Right ventricle myocardium superior (tissue), 1 donor: ENCODE measurements at regions of chr1 and their contacts with region 1.

Region 1: GRCh38 chr1:62407405-62408009 is 29.3 kb upstream of the USP1 start:
- DNase-seq: no peak
- ATAC-seq: no peak

Region 2: DNA sequence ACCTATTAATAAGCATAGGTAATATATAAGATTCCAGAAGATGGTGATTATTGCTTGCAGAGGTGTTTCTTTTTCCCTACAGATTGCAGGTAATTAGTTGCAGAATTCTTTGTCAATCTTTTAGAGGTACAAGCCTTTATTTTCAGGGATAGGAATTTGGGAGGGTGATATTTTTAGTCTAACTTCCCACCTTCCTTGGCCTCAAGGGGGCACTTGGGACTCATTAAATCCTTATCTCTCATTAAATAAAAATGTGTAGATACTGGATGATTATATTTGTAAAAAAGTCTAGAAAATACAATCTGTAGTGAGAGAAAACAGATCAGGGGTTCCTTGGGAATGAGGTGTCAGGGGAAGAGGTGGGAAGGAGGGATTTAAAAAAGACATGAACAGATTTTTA is 486.1 kb before region 1 on chr1:
- intact Hi-C with region 1: no loop called
- DNase-seq: no peak
- ATAC-seq: no peak

Region 3: DNA sequence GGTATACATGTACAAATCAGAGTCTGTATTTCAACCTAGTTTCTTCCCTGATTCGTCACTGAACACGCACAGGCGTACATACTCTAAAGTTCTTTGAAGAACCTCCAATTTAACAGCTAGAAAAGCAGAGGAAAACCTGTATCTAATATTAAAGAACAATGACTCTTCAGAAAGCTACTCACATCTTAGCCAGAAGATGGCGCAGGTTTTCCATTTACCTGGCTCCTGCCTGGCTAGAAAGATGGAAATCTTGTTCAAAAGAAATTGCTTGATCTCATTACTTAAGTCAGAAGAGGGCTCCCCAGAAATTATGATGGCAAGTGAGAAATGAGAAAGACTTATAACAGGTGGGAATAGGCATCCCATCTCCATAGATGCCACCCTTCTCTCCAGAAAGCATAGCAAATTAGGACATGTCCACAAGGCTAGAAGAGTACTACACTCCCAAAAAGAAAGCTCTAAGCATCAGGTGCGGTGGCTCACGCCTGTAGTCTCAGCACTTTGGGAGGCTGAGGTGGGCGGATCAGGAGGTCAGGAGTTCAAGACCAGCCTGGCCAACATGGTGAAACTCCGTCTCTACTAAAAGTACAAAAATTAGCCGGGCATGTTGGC is 231.8 kb before region 1 on chr1:
- intact Hi-C with region 1: loop called (anchors 2 kb)
- DNase-seq: no peak
- ATAC-seq: no peak

Region 4: DNA sequence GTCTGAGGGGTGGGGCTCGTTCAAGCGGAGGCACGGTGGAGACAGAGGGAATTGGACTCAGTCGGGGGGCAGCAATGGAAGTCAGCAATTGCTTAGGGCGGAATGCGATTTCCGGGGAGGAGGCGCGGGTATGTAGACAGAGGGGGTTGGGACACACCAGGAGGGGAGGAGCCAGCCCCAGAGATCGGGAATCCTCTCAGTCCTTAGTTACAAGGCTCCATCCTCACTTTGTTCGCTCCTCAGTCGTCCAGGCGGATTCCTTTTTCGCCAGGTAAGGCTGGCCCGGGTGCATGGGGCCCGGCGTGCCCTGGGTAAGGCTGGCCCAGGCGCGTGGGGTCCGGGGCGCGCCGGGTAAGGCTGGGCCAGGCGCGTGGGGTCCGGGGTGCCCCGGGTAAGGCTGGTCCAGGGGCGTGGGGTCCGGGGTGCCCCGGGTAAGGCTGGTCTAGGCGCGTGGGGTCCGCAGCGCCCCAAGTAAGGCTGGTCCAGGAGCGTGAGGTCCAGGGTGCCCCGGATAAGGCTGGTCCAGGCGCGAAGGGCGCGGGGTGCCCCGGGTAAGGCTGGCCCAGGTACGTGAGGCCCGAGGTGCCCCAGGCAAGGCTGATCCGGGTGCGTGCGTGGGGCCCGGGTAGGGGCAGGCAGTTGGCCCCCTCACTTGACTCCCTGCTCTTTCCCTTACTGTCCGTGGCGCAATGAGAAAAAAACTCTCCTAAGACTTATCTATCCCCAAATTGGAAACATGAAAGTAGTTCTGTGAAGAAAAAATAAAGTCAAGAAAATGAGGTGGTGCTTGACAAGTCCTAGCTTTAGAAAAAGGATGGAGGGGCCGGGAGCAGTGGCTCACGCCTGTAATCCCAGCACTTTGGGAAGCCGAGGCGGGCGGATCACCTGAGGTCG is 212.6 kb before region 1 on chr1 and contains the start of gene L1TD1:
- intact Hi-C with region 1: no loop called
- DNase-seq: no peak
- ATAC-seq: no peak
- total RNA-seq, gene L1TD1: not detected

Region 5: GRCh38 chr1:62337706-62338631 is 69.5 kb before region 1 on chr1:
- intact Hi-C with region 1: no loop called
- DNase-seq: peak; percentile 48
- ATAC-seq: peak; percentile 45

Region 6: GRCh38 chr1:62362061-62362917 is 45.2 kb before region 1 on chr1:
- intact Hi-C with region 1: no loop called
- DNase-seq: no peak
- ATAC-seq: no peak